ENCODE measurements at regions of chr17 and their contacts with region 1.

Region 1: GRCh38 chr17:36117505-36118382 is 14.1 kb downstream of the CCL4 start:
- DNase-seq: peak; percentile 80
- H3K4me3 Mint-ChIP-seq: no peak overlapping the region
- H3K27ac Mint-ChIP-seq: peak overlapping the region; percentile 40
- H3K4me1 Mint-ChIP-seq: peaks cover 35% of the 10 kb centered on the region
- H3K27me3 Mint-ChIP-seq: peaks cover 27% of the 10 kb centered on the region

Region 2: DNA sequence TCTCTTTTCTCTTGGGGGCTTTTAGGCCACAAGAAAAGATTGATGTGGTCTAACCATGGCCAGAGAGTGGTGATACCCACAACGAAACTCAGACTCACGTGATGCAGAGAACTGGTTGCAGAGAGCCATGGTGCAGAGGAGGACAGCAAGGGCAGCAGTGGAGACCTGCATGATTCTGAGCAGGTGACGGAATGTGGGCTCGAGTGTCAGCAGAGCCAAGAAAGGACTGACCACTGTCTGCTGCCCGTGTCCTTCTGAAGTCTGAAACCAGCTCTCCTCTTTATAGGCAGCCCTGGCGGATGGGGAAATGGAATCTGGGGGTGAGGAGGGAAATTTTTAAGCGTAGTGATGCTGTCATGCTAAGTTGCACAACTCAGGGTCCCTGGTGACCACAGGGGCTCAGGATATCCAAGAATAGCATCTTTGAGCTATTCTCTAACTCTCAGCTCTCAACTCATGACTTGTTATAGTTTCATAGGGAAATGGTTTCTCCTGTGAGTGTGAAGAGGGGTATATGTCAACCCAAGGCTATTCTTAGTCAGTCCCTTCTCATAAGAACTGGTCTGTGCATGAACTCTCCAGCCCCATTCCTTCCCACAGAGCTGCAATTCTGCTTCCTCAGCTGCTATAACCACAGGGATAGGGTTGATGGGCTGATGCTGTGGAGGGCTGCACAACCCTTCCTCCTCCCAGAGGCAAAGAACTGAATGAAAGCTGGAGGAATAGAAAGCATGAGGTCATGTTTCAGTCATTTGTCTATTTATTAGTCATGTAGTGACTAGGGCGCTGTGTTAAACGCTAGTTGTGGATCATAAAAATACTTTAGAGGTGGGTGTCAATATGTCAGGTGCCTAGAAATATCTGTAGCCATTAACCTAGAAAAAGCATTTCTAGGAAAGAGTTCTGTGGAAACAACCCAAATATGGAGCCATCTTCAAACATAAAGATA is 27.6 kb before region 1 on chr17 and contains the start of gene CCL3:
- CTCF ChIA-PET with region 1: interaction called, 8 read pairs
- POLR2A ChIA-PET with region 1: interaction called, 34 read pairs
- intact Hi-C with region 1: loop called (anchors 1 kb)
- DNase-seq: peak; percentile 79
- H3K4me3 Mint-ChIP-seq: peak within 1 kb of the TSS; percentile 64
- H3K27ac Mint-ChIP-seq: peak within 1 kb of the TSS; percentile 74
- H3K4me1 Mint-ChIP-seq: peaks cover 56% of the 10 kb centered on the region
- H3K27me3 Mint-ChIP-seq: peaks cover 26% of the 10 kb centered on the region
- total RNA-seq, gene CCL3: 981 to 989 TPM

Region 3: DNA sequence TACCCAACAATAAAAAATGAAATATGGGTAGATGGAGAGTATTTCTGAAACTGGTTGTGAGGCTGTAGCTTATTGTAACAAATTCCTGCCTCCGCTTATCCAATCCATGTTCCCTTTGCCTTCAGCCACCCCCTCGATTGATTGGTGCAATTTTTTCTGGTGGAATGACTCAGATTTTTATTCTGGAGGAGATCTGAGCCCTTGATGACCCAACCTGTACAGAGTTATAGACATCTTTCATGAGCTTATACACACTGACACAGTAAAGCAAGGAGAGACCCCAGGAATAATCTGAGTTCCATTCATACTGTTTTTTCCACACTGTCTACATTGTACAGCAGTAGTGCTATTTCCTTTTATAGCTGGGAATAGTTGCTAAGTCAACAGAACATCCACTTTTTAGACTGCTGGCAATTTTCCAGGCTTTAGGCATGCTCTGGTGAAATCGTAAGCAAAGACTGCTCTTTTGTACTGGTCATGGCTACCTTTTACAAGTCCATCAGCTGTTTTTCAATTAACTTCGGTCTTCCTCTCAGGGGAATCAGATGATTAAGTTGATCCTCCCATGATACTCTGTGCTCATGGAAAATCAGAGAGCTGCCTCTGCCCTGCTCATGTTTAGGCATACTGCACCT is 16.0 kb after region 1 on chr17:
- CTCF ChIA-PET with region 1: no interaction called
- POLR2A ChIA-PET with region 1: no interaction called
- intact Hi-C with region 1: loop called (anchors 2 kb)
- DNase-seq: no peak
- H3K4me3 Mint-ChIP-seq: no peak overlapping the region
- H3K27ac Mint-ChIP-seq: no peak overlapping the region
- H3K4me1 Mint-ChIP-seq: no peaks in the 10 kb centered on the region
- H3K27me3 Mint-ChIP-seq: peaks cover 27% of the 10 kb centered on the region

Region 4: DNA sequence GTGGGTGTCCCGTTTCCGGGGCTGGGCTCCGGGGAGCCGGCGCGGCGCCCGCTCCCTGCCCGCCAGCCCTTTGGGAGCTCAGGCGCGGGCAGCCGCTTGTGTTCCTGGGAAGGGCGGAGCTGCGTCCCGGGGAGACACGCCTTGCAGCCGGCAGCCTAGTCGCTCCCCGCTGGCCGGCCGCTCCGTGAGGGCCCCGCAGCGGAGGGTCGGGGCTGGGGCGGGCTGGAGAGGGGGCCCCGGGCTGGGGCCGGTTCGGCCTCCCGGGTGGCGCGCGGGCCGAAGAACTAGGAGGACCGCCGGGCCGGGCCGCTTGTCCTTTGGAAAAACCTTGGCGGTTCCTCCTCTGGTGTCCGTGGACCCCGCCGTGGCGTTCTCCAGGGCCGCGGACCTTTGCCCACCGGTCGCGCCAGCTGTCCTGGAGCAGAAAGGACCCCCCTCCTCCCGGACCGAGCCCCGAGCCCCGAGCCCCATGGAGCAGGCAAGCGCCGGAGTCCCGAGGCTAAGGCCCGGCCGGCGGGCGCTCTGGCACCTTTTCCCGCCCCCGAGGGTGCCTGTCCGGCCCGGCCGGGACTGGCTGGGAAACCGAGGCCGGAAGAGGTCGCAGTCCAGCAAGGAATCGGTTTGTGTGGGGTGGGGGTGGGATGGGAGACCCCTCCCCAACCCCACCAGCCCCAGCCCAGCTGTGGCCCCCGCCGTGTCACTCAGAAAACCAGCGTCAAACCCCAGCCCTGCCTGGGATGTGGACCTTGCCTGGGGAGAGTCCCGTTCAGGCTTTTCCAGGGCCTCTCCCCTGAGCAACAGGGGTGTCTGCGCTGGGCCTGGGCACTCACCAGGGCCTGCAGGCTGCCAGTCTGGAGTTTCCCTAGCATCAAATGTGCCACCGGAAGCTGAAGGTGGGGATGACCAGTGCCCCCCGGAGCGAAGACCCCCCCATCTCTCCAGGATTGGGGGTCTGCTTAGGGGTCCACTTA is 65.5 kb after region 1 on chr17:
- CTCF ChIA-PET with region 1: no interaction called
- POLR2A ChIA-PET with region 1: no interaction called
- intact Hi-C with region 1: loop called (anchors 10 kb)
- DNase-seq: peak; percentile 30
- H3K4me3 Mint-ChIP-seq: peak overlapping the region; percentile 24
- H3K27ac Mint-ChIP-seq: no peak overlapping the region
- H3K4me1 Mint-ChIP-seq: peaks cover 4% of the 10 kb centered on the region
- H3K27me3 Mint-ChIP-seq: peaks cover 59% of the 10 kb centered on the region

Measured in activated CD4-positive, alpha-beta memory T cell treated with anti-CD3 and anti-CD28 coated beads for 36 hours (primary cell).